Ovary (tissue), 10 donors: ENCODE measurements at regions of chr11 and their contacts with region 1.

Region 1: GRCh38 chr11:45147017-45147728 is 734 bp downstream of the PRDM11 start:
- DNase-seq: peak; percentile 92 to 96 (median 95)
- H3K4me3 ChIP-seq: peak overlapping the region; percentile 74
- H3K27ac ChIP-seq: peak overlapping the region; percentile 88 to 92
- H3K4me1 ChIP-seq: peaks cover 16% of the 10 kb centered on the region
- H3K27me3 ChIP-seq: no peaks in the 10 kb centered on the region
- CTCF ChIP-seq: no peak
- EP300 ChIP-seq: no peak
- POLR2A ChIP-seq: peak; percentile 63

Region 2: DNA sequence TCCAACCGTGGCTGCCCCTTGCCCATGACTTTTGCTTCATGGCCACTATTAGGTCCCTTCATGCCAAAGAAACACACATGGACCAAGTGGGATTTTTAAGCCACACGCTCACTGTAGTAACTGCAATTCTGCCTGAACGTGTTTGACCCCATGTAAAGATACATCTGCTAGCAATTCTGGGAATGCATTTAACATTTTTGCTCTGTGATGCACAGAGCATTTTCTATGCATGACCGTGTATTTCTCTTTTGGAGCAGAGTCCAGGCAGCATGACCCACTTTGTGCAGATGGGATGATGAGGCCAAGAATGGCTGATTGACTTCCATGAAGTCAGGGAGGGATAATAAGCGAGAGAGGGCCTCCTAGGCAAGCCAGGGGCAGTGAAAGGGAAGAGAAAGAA is 305.0 kb before region 1 on chr11:
- intact Hi-C with region 1: no loop called
- DNase-seq: no peak
- H3K4me3 ChIP-seq: no peak overlapping the region
- H3K27ac ChIP-seq: no peak overlapping the region
- H3K4me1 ChIP-seq: no peaks in the 10 kb centered on the region
- H3K27me3 ChIP-seq: no peaks in the 10 kb centered on the region
- CTCF ChIP-seq: no peak
- EP300 ChIP-seq: no peak
- POLR2A ChIP-seq: no peak

Region 3: GRCh38 chr11:45079943-45080719 is 67.0 kb before region 1 on chr11:
- intact Hi-C with region 1: no loop called
- DNase-seq: no peak
- H3K4me3 ChIP-seq: no peak overlapping the region
- H3K27ac ChIP-seq: no peak overlapping the region
- H3K4me1 ChIP-seq: no peaks in the 10 kb centered on the region
- H3K27me3 ChIP-seq: no peaks in the 10 kb centered on the region
- CTCF ChIP-seq: no peak
- EP300 ChIP-seq: no peak
- POLR2A ChIP-seq: no peak

Region 4: GRCh38 chr11:45180179-45180842 is 33.1 kb after region 1 on chr11:
- intact Hi-C with region 1: loop called in 2 of 4 experiments (anchors 1 to 5 kb)
- DNase-seq: peak; percentile 53 to 74 (median 71)
- H3K4me3 ChIP-seq: peak overlapping the region; percentile 65
- H3K27ac ChIP-seq: peak overlapping the region; percentile 82 to 91
- H3K4me1 ChIP-seq: peaks cover 17% of the 10 kb centered on the region
- H3K27me3 ChIP-seq: no peaks in the 10 kb centered on the region
- CTCF ChIP-seq: peak in 2 of 3 donors; percentile 21 to 29
- EP300 ChIP-seq: no peak
- POLR2A ChIP-seq: no peak

Region 5: DNA sequence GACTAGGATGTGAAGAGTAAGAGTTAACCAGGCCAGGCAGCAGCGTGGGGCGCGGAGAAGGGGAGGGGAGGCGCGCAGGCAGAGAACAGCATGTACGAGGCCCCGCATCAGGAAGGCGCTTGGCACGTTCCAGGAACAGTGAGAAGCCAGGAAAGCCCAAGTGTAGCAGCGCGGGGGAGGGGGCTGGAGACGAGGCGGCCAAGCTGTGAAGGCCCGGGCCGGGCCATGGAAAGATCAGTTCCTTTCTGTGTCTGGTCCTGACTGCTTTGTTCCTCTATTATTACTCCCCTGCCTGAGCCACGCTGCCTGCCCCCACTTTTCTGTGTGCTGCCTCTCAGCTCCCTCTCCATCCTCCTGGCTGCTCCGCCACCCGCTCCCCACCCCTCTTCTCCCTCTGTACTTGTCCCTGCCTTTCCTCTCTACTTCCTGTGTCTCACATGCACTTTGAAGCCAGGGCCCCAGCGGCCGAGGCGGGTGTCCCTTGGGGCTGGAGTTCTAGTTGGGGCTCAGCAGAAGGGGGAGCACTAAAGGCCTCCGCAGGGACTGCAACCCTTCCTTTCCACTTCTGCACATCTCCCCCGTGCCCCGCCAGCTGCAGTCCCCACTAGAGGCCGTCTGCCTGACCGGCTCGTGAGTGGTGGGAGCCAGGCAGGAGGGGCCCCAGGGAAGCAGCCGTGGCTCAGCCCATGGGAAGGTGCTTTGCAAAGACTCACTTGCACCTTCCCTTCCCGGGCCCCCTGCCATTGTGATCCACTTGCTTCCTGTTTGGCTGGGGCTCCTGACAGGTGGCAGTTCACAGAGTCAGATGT is 62.9 kb after region 1 on chr11:
- intact Hi-C with region 1: loop called in 2 of 4 experiments (anchors 2 kb)
- DNase-seq: peak; percentile 87 to 97 (median 95)
- H3K4me3 ChIP-seq: peak overlapping the region; percentile 14
- H3K27ac ChIP-seq: peak overlapping the region; percentile 87 to 90
- H3K4me1 ChIP-seq: peaks cover 12% of the 10 kb centered on the region
- H3K27me3 ChIP-seq: no peaks in the 10 kb centered on the region
- CTCF ChIP-seq: peak in 1 of 3 donors; percentile 14
- EP300 ChIP-seq: peak; percentile 74
- POLR2A ChIP-seq: peak; percentile 28

Region 6: GRCh38 chr11:45233121-45233803 is 86.1 kb after region 1 on chr11:
- intact Hi-C with region 1: loop called in 2 of 4 experiments (anchors 5 to 10 kb)
- DNase-seq: peak; percentile 57 to 83 (median 69)
- H3K4me3 ChIP-seq: no peak overlapping the region
- H3K27ac ChIP-seq: no peak overlapping the region
- H3K4me1 ChIP-seq: no peaks in the 10 kb centered on the region
- H3K27me3 ChIP-seq: no peaks in the 10 kb centered on the region
- CTCF ChIP-seq: peak; percentile 50 to 75 (median 55)
- EP300 ChIP-seq: no peak
- POLR2A ChIP-seq: no peak

Region 7: GRCh38 chr11:45267052-45267451 is 119.9 kb after region 1 on chr11:
- intact Hi-C with region 1: no loop called
- DNase-seq: no peak
- H3K4me3 ChIP-seq: no peak overlapping the region
- H3K27ac ChIP-seq: no peak overlapping the region
- H3K4me1 ChIP-seq: no peaks in the 10 kb centered on the region
- H3K27me3 ChIP-seq: no peaks in the 10 kb centered on the region
- CTCF ChIP-seq: no peak
- EP300 ChIP-seq: no peak
- POLR2A ChIP-seq: no peak